CD8-positive, alpha-beta T cell (primary cell): ENCODE measurements at regions of chr11 and their contacts with region 1.

Region 1: GRCh38 chr11:62591448-62592145 is at the start of gene TUT1:
- DNase-seq: peak; percentile 92 to 100 (median 96)
- ATAC-seq: peak; percentile 87
- H3K4me3 ChIP-seq: peak within 1 kb of the TSS; percentile 72 to 79
- H3K4me3 Mint-ChIP-seq: peak within 1 kb of the TSS; percentile 95
- H3K27ac ChIP-seq: peak within 1 kb of the TSS; percentile 87 to 93
- H3K27ac Mint-ChIP-seq: peak within 1 kb of the TSS; percentile 98
- H3K4me1 ChIP-seq: peaks cover 32% of the 10 kb centered on the region
- H3K4me1 Mint-ChIP-seq: peaks cover 48% of the 10 kb centered on the region
- H3K27me3 ChIP-seq: no peaks in the 10 kb centered on the region
- H3K27me3 Mint-ChIP-seq: no peaks in the 10 kb centered on the region
- CTCF ChIP-seq: no peak
- total RNA-seq, gene TUT1: 15.3 to 17.7 TPM

Region 2: GRCh38 chr11:61281581-61282250 is 1309.9 kb before region 1 on chr11:
- CTCF ChIA-PET with region 1: no interaction called
- POLR2A ChIA-PET with region 1: no interaction called
- intact Hi-C with region 1: no loop called
- DNase-seq: peak in 3 of 9 experiments; percentile 15 to 25 (median 20)
- ATAC-seq: peak; percentile 42
- H3K4me3 ChIP-seq: no peak overlapping the region
- H3K4me3 Mint-ChIP-seq: no peak overlapping the region
- H3K27ac ChIP-seq: no peak overlapping the region
- H3K27ac Mint-ChIP-seq: no peak overlapping the region
- H3K4me1 ChIP-seq: no peaks in the 10 kb centered on the region
- H3K4me1 Mint-ChIP-seq: no peaks in the 10 kb centered on the region
- H3K27me3 ChIP-seq: no peaks in the 10 kb centered on the region
- H3K27me3 Mint-ChIP-seq: no peaks in the 10 kb centered on the region
- CTCF ChIP-seq: no peak

Region 3: GRCh38 chr11:62514151-62514550 is 77.4 kb before region 1 on chr11:
- CTCF ChIA-PET with region 1: no interaction called
- POLR2A ChIA-PET with region 1: no interaction called
- intact Hi-C with region 1: no loop called
- DNase-seq: no peak
- ATAC-seq: no peak
- H3K4me3 ChIP-seq: no peak overlapping the region
- H3K4me3 Mint-ChIP-seq: no peak overlapping the region
- H3K27ac ChIP-seq: no peak overlapping the region
- H3K27ac Mint-ChIP-seq: no peak overlapping the region
- H3K4me1 ChIP-seq: no peaks in the 10 kb centered on the region
- H3K4me1 Mint-ChIP-seq: peaks cover 2% of the 10 kb centered on the region
- H3K27me3 ChIP-seq: no peaks in the 10 kb centered on the region
- H3K27me3 Mint-ChIP-seq: no peaks in the 10 kb centered on the region
- CTCF ChIP-seq: no peak

Region 4: DNA sequence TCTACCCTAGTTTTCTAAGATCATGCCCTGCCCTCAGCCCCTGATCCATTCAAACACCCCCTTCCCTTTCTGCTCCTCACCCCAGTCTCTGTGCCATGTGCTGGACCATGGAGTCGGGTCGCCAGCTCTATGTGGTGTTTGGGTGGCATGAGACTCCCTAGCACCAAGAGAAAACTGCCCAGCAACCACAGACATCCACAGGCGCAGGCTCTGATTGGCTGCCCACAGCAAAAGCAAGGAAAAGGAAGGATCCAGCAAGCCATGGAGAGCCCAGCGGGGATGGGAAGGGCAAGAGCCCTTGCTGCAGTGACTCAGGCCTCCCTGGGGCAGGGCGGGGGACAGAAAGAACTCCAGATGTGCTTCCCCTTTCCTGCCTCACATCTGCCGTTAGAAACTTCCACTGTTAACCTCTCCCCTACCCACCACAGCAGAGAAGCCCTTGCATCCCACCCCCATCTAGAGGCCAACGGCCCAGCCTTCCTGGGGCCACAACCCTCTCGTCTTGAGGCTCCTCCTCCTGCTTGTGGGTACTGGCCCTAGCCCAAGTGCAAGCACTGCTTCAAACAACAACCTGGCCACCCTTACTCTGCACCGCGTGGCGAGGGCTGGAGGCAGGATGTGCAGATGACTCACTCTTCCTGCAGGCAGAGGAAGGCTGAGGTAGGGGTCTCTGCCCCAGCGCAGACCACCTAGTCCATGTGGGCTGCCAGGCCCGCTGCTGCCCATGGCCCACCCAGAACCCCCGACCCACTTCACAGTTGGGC is 35.3 kb before region 1 on chr11:
- CTCF ChIA-PET with region 1: interaction called, 11 read pairs
- POLR2A ChIA-PET with region 1: interaction called, 17 read pairs
- intact Hi-C with region 1: loop called in 1 of 2 experiments (anchors 1 kb)
- DNase-seq: peak; percentile 72 to 96 (median 90)
- ATAC-seq: peak; percentile 52
- H3K4me3 ChIP-seq: peak overlapping the region; percentile 14 to 28
- H3K4me3 Mint-ChIP-seq: peak overlapping the region; percentile 77
- H3K27ac ChIP-seq: peak overlapping the region; percentile 86 to 92
- H3K27ac Mint-ChIP-seq: peak overlapping the region; percentile 97
- H3K4me1 ChIP-seq: peaks cover 87% of the 10 kb centered on the region
- H3K4me1 Mint-ChIP-seq: peaks cover 86% of the 10 kb centered on the region
- H3K27me3 ChIP-seq: no peaks in the 10 kb centered on the region
- H3K27me3 Mint-ChIP-seq: no peaks in the 10 kb centered on the region
- CTCF ChIP-seq: no peak

Region 5: DNA sequence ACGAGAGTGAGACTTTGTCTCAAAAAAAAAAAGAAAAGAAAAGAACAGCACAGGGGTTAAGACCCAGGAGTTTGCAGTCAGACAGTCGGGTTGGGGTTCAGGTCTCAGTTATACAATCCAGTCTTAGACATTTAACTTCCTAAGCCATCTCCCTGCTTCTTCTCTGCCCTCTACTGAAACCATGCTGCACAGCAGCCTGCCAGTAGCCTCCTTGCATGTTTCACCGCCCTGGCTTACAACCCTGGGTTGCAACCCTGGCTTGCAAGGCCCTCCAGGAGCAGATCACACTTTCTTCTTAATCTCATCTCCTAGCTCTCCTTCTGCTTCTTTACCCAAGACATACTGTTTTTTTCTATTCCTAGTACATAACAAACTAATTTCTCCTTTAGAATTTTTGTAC is 36.1 kb after region 1 on chr11:
- CTCF ChIA-PET with region 1: interaction called, 23 read pairs
- POLR2A ChIA-PET with region 1: interaction called, 59 read pairs
- intact Hi-C with region 1: loop called in 1 of 2 experiments (anchors 1 kb)
- DNase-seq: peak in 1 of 9 experiments; percentile 31
- ATAC-seq: peak; percentile 37
- H3K4me3 ChIP-seq: no peak overlapping the region
- H3K4me3 Mint-ChIP-seq: no peak overlapping the region
- H3K27ac ChIP-seq: no peak overlapping the region
- H3K27ac Mint-ChIP-seq: no peak overlapping the region
- H3K4me1 ChIP-seq: no peaks in the 10 kb centered on the region
- H3K4me1 Mint-ChIP-seq: peaks cover 7% of the 10 kb centered on the region
- H3K27me3 ChIP-seq: no peaks in the 10 kb centered on the region
- H3K27me3 Mint-ChIP-seq: no peaks in the 10 kb centered on the region
- CTCF ChIP-seq: no peak

Region 6: DNA sequence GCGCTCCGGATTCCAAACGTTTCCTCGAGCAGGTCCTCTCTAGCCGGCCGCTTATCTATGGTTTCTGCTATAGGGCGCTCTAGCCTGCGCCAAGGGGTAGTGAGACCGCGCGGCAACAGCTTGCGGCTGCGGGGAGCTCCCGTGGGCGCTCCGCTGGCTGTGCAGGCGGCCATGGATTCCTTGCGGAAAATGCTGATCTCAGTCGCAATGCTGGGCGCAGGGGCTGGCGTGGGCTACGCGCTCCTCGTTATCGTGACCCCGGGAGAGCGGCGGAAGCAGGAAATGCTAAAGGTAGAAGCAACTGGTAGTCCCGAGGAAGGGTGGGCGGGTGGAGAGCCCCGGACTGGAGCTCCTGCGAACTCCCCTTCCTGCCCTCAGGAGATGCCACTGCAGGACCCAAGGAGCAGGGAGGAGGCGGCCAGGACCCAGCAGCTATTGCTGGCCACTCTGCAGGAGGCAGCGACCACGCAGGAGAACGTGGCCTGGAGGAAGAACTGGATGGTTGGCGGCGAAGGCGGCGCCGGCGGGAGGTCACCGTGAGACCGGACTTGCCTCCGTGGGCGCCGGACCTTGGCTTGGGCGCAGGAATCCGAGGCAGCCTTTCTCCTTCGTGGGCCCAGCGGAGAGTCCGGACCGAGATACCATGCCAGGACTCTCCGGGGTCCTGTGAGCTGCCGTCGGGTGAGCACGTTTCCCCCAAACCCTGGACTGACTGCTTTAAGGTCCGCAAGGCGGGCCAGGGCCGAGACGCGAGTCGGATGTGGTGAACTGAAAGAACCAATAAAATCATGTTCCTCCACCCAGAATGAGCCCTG is 80.2 kb after region 1 on chr11 and contains the starts of genes LBHD1 and UQCC3:
- CTCF ChIA-PET with region 1: interaction called, 7 read pairs
- POLR2A ChIA-PET with region 1: interaction called, 116 read pairs
- intact Hi-C with region 1: no loop called
- DNase-seq: peak; percentile 41 to 87 (median 70)
- ATAC-seq: peak; percentile 63
- H3K4me3 ChIP-seq: peak within 1 kb of the TSS; percentile 93 to 99
- H3K4me3 Mint-ChIP-seq: peak within 1 kb of the TSS; percentile 99
- H3K27ac ChIP-seq: peak within 1 kb of the TSS; percentile 77 to 78
- H3K27ac Mint-ChIP-seq: peak within 1 kb of the TSS; percentile 92
- H3K4me1 ChIP-seq: peaks cover 36% of the 10 kb centered on the region
- H3K4me1 Mint-ChIP-seq: peaks cover 62% of the 10 kb centered on the region
- H3K27me3 ChIP-seq: no peaks in the 10 kb centered on the region
- H3K27me3 Mint-ChIP-seq: no peaks in the 10 kb centered on the region
- CTCF ChIP-seq: no peak
- total RNA-seq, gene LBHD1: 14.5 to 14.6 TPM
- total RNA-seq, gene UQCC3: 1.1 to 1.7 TPM

Region 7: DNA sequence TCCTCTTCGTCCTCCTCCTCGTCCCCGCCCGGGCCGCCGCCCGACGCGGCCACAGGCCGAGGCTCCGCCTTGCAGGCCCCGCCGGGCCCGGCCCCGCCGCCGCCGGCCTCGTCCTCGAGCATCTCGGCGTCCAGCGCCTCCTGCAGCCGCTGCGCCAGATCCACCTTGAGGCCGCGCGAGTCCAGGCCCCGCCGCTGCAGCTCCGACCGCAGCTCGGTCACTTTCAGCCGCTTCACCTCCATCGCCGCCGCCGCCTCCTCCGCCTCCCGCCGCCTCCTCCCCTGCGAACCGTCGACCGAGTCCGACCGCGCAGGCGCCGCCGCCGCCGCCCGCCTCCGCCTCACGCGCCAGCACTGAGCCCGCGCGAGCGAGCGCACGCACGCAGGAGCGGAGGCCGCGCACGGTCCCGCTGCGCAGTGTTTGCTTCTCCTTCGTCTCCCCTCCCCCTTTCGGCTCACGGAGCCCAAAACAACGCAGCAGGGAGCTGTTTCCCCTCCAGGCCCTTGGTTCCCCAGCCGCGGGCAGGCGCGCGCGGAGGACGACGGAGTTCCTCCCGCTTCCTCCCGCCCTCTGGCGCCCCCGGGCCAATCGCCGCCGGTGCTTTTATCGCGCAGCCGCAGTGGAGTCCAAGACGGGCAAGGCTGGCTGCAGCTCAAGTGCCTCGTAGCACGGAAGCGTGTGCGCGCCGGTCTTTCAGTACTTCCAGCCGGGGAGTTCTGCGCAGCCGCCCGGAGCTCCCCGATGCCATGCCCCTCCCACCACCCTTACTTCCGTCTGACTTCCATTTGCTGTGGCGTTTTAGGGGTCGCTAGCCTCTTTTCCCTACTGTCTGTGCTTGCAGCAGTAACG is 135.5 kb after region 1 on chr11 and contains the start of gene HNRNPUL2:
- CTCF ChIA-PET with region 1: interaction called, 5 read pairs
- POLR2A ChIA-PET with region 1: interaction called, 34 read pairs
- intact Hi-C with region 1: loop called (anchors 1 kb)
- DNase-seq: peak; percentile 96 to 100 (median 99)
- ATAC-seq: peak; percentile 85
- H3K4me3 ChIP-seq: peak within 1 kb of the TSS; percentile 77 to 81
- H3K4me3 Mint-ChIP-seq: peak within 1 kb of the TSS; percentile 96
- H3K27ac ChIP-seq: peak within 1 kb of the TSS; percentile 82 to 91
- H3K27ac Mint-ChIP-seq: peak within 1 kb of the TSS; percentile 98
- H3K4me1 ChIP-seq: peaks cover 46% of the 10 kb centered on the region
- H3K4me1 Mint-ChIP-seq: peaks cover 57% of the 10 kb centered on the region
- H3K27me3 ChIP-seq: no peaks in the 10 kb centered on the region
- H3K27me3 Mint-ChIP-seq: no peaks in the 10 kb centered on the region
- CTCF ChIP-seq: no peak
- total RNA-seq, gene HNRNPUL2: 29.6 to 31.5 TPM

Region 8: DNA sequence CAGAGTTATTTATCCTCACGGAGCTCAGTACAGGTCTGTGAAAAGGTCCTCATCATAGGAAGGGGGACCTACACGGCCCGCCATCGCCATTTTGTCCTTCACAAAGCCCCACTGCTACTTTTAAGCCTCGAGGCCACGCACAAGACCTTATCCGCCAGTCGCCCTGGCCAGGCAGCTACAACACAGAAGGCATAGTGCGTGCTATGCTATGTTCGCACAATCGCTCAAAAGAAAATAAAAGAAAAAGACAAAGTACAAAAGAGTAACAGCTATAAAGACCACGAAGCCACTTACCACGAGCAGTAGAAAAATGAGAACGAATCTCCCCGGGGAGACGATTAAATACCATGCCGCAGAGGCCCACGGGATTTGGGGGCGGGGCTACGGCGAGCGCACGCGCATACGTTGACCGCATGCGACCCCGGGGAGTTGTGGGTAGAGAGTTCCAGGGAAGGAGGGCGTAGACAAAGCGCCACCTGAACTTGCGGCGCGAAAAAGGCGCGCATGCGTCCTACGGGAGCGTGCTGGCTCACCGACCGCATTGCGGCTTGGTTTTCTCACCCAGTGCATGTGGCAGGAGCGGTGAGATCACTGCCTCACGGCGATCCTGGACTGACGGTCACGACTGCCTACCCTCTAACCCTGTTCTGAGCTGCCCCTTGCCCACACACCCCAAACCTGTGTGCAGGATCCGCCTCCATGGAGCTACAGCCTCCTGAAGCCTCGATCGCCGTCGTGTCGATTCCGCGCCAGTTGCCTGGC is 264.2 kb after region 1 on chr11:
- CTCF ChIA-PET with region 1: interaction called, 4 read pairs
- POLR2A ChIA-PET with region 1: interaction called, 33 read pairs
- intact Hi-C with region 1: loop called in 1 of 2 experiments (anchors 5 kb)
- DNase-seq: peak; percentile 96 to 100 (median 98)
- ATAC-seq: peak; percentile 91
- H3K4me3 ChIP-seq: peak overlapping the region; percentile 82 to 89
- H3K4me3 Mint-ChIP-seq: peak overlapping the region; percentile 96
- H3K27ac ChIP-seq: peak overlapping the region; percentile 76 to 84
- H3K27ac Mint-ChIP-seq: peak overlapping the region; percentile 91
- H3K4me1 ChIP-seq: peaks cover 36% of the 10 kb centered on the region
- H3K4me1 Mint-ChIP-seq: peaks cover 56% of the 10 kb centered on the region
- H3K27me3 ChIP-seq: no peaks in the 10 kb centered on the region
- H3K27me3 Mint-ChIP-seq: no peaks in the 10 kb centered on the region
- CTCF ChIP-seq: no peak